ENCODE measurements at regions of chr3 and their contacts with region 1.

Region 1: DNA sequence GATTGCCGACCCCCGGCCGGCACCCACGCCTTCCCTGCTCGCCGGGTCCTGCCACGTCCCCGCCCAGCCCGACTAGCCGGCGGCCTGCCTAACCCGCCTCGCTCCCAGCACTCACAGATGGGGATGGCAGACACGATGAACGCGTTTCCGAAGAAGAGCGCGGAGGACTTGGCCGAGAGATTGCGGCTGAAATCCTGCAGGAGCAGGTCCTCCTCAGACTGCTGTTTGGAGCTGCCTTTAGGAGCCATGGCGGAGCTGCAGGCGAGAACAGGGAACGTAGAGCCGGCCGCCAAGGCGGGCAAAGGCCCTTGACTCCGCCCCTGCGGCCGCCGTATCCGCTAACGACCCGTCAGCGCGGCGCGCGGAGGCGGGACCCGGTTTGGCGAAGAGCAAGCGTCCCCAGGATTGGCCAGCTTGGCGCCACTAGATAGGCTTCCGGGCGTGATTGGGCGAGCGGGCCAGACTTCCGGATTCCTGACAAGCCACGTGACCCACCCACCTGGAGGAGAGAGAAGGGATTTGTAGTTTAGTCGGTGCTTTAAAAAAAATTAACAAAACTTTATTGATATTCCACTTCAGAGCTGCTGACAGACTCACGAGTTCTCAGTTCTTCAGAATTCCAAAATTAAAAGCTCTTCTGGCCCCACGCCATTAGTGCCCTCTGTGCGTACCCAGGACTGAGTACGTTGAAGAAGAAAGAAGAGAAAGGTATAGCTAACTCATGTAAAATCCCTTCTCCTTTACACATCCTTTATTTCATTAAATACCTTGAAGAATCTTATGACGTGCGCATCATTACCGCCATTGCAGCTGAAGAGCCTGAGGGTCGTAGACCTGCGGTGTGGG is at the start of gene SSR3:
- DNase-seq: peak; percentile 94
- ATAC-seq: peak; percentile 99
- H3K4me3 Mint-ChIP-seq: peak within 1 kb of the TSS; percentile 98
- H3K27ac Mint-ChIP-seq: peak within 1 kb of the TSS; percentile 91
- H3K4me1 Mint-ChIP-seq: peaks cover 37% of the 10 kb centered on the region
- H3K27me3 Mint-ChIP-seq: no peaks in the 10 kb centered on the region
- CTCF ChIP-seq: no peak
- total RNA-seq, gene SSR3: 64.3 and 69.2 TPM in 2 replicates

Region 2: GRCh38 chr3:155854141-155854940 is 700.7 kb before region 1 on chr3 and contains the start of gene SLC33A1:
- CTCF ChIA-PET with region 1: no interaction called
- POLR2A ChIA-PET with region 1: interaction called, 6 read pairs
- intact Hi-C with region 1: loop called (anchors 2 kb)
- DNase-seq: peak; percentile 97
- ATAC-seq: peak; percentile 91
- H3K4me3 Mint-ChIP-seq: peak within 1 kb of the TSS; percentile 98
- H3K27ac Mint-ChIP-seq: peak within 1 kb of the TSS; percentile 98
- H3K4me1 Mint-ChIP-seq: peaks cover 41% of the 10 kb centered on the region
- H3K27me3 Mint-ChIP-seq: no peaks in the 10 kb centered on the region
- CTCF ChIP-seq: no peak
- total RNA-seq, gene SLC33A1: 19.8 and 23.3 TPM in 2 replicates

Region 3: GRCh38 chr3:156483961-156484787 is 70.9 kb before region 1 on chr3:
- CTCF ChIA-PET with region 1: interaction called, 3 read pairs
- POLR2A ChIA-PET with region 1: interaction called, 5 read pairs
- intact Hi-C with region 1: loop called (anchors 1 kb)
- DNase-seq: peak; percentile 20
- ATAC-seq: peak; percentile 81
- H3K4me3 Mint-ChIP-seq: peak overlapping the region; percentile 79
- H3K27ac Mint-ChIP-seq: peak overlapping the region; percentile 93
- H3K4me1 Mint-ChIP-seq: peaks cover 32% of the 10 kb centered on the region
- H3K27me3 Mint-ChIP-seq: peaks cover under 1% of the 10 kb centered on the region
- CTCF ChIP-seq: no peak

Region 4: DNA sequence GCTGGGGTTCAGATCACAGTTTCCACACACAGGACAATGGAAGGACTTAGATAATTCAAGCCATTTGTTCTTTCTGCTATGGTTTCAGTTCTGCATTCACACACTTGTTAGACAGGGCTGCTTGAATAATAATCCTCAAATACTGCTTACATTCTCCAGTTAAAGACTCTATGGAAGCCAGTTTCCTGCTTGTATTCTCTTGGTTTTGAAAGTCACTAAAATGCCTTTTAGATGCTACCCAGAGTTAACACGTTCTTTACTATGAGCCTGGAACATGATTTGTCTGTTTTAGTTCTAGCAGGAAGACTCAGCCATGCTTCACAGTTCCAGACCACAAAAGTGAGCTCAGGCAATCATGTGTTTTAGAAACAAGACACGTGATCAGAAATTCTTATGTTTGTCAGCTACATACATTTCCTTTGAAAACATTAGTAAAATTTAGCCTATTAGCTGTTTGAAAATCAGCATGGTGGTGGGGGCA is 423.5 kb after region 1 on chr3:
- CTCF ChIA-PET with region 1: no interaction called
- POLR2A ChIA-PET with region 1: no interaction called
- intact Hi-C with region 1: loop called (anchors 2 kb)
- DNase-seq: no peak
- ATAC-seq: peak; percentile 90
- H3K4me3 Mint-ChIP-seq: peak overlapping the region; percentile 61
- H3K27ac Mint-ChIP-seq: peak overlapping the region; percentile 95
- H3K4me1 Mint-ChIP-seq: peaks cover 51% of the 10 kb centered on the region
- H3K27me3 Mint-ChIP-seq: no peaks in the 10 kb centered on the region
- CTCF ChIP-seq: no peak

Region 5: DNA sequence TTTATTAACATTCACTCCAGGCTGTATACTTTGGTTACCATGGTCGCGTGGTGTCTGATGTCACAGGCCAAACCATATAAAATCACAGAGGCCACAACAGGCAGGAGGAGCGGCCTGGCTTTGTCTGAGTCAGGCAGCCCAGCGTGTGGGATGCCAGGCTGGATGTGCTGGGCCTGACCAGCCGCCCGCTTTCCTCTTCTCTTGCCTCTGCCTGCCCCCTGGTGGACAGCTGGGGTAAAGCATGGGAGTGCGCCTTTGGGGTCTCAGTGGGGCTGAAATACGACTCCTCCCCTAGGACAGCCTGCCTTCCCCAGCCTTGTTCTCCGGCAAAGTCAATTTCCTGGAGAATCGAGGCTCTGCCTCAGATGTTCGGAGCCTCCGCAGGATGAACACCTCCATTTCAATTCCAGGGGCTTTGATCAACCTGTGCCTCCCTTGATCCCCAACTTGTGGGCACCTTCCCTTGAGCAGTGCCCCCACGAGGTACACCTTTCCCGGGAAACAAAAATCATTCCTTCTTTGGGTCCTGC is 526.7 kb after region 1 on chr3:
- CTCF ChIA-PET with region 1: interaction called, 6 read pairs
- POLR2A ChIA-PET with region 1: interaction called, 30 read pairs
- intact Hi-C with region 1: loop called (anchors 2 kb)
- DNase-seq: peak; percentile 86
- ATAC-seq: peak; percentile 99
- H3K4me3 Mint-ChIP-seq: no peak overlapping the region
- H3K27ac Mint-ChIP-seq: peak overlapping the region; percentile 63
- H3K4me1 Mint-ChIP-seq: peaks cover 10% of the 10 kb centered on the region
- H3K27me3 Mint-ChIP-seq: no peaks in the 10 kb centered on the region
- CTCF ChIP-seq: peak; percentile 88

Region 6: GRCh38 chr3:157136647-157137387 is 581.8 kb after region 1 on chr3:
- CTCF ChIA-PET with region 1: interaction called, 5 read pairs
- POLR2A ChIA-PET with region 1: no interaction called
- intact Hi-C with region 1: loop called (anchors 1 kb)
- DNase-seq: no peak
- ATAC-seq: no peak
- H3K4me3 Mint-ChIP-seq: no peak overlapping the region
- H3K27ac Mint-ChIP-seq: no peak overlapping the region
- H3K4me1 Mint-ChIP-seq: peaks cover 5% of the 10 kb centered on the region
- H3K27me3 Mint-ChIP-seq: no peaks in the 10 kb centered on the region
- CTCF ChIP-seq: no peak

Measured in activated B cell treated with CpG ODN at 0.5 μM for 24 hours (primary cell).